Calu3 (cell line): ENCODE measurements at regions of chr4 and their contacts with region 1.

Region 1: GRCh38 chr4:7873881-7874280 is 65.8 kb downstream of the AFAP1 start:
- DNase-seq: no peak
- H3K4me3 Mint-ChIP-seq: no peak overlapping the region
- H3K27ac Mint-ChIP-seq: no peak overlapping the region
- H3K4me1 Mint-ChIP-seq: peaks cover 11% of the 10 kb centered on the region
- H3K27me3 Mint-ChIP-seq: no peaks in the 10 kb centered on the region
- CTCF ChIP-seq: no peak

Region 2: DNA sequence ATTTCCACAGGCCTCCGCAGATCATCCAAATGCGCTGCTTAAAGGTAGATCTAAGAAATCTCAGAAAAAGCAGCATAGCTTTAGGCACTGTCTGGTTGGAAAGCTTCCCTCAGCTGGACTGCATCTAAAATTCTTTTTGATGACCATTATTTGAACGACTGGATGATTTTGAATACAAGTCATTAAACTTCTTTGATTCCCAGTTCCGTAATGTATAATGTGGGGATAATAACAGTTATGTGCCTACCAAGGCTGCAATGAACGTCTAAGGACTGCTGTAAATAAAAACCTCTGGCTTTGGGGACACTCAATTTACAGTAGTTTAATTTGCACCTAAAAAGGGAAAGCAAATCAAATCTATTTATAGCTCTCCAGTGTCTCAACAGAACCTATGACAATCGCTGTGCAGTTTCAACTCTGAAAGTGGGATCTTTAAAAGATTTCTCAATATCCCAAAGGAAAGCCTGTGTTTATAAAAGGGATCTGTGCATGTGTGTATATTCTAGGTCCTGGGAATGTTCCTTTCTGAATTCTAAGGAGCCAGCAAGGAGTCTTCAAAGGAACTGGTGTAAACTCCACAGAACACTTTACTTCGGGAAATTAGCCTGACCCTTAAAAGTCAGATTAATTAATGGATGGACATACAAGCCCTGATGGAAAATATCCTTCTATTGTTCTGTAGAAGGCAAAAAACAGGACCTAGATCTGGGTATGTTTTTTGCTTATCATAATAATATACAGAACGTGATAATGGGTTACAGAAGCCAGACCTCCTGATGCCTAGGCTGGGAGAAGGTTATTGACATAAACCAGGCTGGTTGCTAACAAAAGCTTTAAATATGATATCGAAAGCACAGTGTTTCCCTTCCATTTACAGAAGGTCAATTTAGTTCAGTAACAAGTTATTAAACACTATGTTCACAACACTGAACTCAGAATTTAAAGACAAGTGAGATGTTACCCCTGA is 12.4 kb after region 1 on chr4:
- CTCF ChIA-PET with region 1: no interaction called
- intact Hi-C with region 1: loop called (anchors 1 kb)
- DNase-seq: no peak
- H3K4me3 Mint-ChIP-seq: no peak overlapping the region
- H3K27ac Mint-ChIP-seq: no peak overlapping the region
- H3K4me1 Mint-ChIP-seq: peaks cover 18% of the 10 kb centered on the region
- H3K27me3 Mint-ChIP-seq: no peaks in the 10 kb centered on the region
- CTCF ChIP-seq: no peak